ENCODE measurements at regions of chr3 and their contacts with region 1.

Region 1: GRCh38 chr3:189340672-189341460 is 169.1 kb downstream of the TPRG1 start:
- DNase-seq: no peak

Region 2: DNA sequence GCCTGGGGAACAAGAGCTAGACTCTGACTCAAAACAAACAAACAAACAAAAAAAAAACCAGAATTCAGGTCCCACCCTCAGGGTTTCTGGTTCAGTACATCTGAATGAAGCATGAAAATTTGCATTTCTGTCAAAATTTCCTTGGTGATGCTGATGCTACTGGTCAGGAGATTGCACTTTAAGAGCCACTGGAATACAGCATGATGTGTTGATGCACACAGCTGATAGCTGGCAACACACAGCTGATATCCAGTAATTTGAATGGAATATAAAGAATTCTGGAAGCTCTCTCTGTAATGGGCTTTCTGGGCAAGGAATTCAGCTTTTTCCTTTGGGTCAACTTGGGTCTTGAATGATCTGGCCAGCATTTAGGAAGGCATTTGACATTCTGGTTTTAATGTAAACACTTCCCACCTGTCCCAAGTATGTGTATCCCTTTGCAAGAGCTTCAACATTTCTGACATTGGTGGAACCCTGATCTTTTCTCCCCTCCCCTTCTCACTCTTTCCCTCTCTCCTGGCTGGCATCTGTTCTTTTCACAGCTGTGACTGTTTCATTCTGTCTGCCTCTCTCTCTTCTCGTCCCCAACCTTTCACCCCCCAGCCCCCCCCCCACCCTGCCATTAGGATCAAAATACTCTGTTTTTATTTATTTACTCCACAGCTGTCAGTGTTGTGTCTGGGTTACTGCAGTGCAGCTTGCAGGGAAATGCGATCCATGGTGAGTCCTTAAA is 20.4 kb after region 1 on chr3:
- intact Hi-C with region 1: loop called (anchors 1 kb)
- DNase-seq: no peak

Measured in posterior cingulate gyrus (tissue), 11 donors.